Right ventricle myocardium inferior (tissue), 1 donor: ENCODE measurements at regions of chr6 and their contacts with region 1.

Region 1: DNA sequence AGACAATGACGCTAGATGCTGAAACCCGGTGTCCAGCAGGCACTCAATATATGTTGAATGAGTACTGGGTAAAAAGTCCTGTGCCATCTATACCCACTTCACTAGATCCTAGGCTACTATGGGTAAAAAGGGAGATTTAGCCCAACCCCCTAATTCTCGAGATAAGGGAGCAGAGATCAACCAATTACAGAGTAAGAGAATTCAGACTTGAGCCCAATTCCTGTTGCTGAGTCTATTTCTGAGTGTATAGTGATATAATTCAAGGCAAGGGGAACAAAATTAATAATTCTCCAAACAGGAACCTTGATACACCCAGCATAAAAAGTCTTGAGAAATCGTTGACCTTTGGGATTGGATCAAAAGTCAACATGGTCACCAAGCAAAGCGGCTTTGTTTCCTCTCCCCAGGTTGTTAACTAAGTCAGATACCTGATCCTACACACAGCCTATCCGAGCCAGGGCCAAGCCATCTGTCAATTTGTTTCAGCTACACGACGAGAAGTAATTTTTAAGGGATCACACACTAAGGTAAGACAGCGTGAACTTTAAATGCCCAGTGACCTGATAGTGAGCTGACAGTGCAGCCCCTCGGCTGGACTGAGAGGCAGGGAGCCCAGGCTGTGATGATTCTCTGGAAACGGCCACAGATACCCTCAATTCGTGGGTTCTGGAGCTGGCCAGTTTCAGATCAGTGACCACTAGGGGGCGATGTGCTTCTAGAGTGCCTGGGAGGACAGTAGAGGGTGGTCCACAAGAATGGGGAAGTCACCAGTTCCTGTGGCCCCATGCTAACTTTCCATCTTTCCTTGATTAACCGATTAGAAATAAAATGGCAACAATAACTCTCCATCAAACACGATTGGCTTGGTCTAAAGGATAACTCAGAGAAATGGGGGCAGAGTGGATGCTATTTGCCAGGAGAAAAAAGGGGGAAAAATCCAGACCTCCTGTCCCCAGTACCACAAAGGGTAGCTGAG is 46.2 kb downstream of the SLC22A23 start:
- DNase-seq: peak; percentile 57
- ATAC-seq: no peak

Region 2: DNA sequence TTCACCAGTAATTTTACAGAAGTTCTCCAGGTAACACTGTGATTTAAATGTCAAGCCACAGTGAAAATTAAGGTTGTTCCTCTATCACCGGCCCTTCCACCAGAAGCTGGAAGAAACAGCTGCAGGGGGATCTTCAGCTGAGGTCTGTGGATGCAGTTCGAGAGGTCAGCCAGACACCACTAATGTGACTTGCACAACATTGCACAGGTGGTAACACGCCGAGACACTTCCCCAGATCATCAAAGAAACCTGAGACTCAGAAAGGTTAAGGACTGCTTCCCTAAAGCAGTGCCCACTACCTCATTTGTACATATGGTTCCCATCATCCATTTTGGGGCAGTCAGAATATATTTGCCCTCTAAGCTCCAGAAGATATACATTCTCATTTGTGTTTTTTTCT is 499.5 kb before region 1 on chr6:
- intact Hi-C with region 1: no loop called
- DNase-seq: no peak
- ATAC-seq: no peak

Region 3: GRCh38 chr6:3721810-3722626 is 311.3 kb after region 1 on chr6:
- intact Hi-C with region 1: loop called (anchors 10 kb)
- DNase-seq: no peak
- ATAC-seq: no peak